Caco-2 (cell line): ENCODE measurements at regions of chr7 and their contacts with region 1.

Region 1: GRCh38 chr7:39948956-39949928 is 814 bp upstream of the CDK13 start:
- DNase-seq: peak; percentile 98 to 99
- H3K4me3 ChIP-seq: peak overlapping the region; percentile 93
- H3K4me3 Mint-ChIP-seq: peak overlapping the region; percentile 96
- H3K27ac Mint-ChIP-seq: peak overlapping the region; percentile 99
- H3K4me1 ChIP-seq: peaks cover 9% of the 10 kb centered on the region; the same call in 1 of the 2 replicates
- H3K4me1 Mint-ChIP-seq: no peaks in the 10 kb centered on the region
- H3K27me3 ChIP-seq: no peaks in the 10 kb centered on the region
- H3K27me3 Mint-ChIP-seq: no peaks in the 10 kb centered on the region
- CTCF ChIP-seq: no peak

Region 2: GRCh38 chr7:40057292-40057691 is 108.0 kb after region 1 on chr7:
- CTCF ChIA-PET with region 1: interaction called, 20 read pairs
- POLR2A ChIA-PET with region 1: no interaction called
- intact Hi-C with region 1: loop called (anchors 1 kb)
- DNase-seq: no peak
- H3K4me3 ChIP-seq: no peak overlapping the region
- H3K4me3 Mint-ChIP-seq: no peak overlapping the region
- H3K27ac Mint-ChIP-seq: no peak overlapping the region
- H3K4me1 ChIP-seq: peaks cover 9% of the 10 kb centered on the region
- H3K4me1 Mint-ChIP-seq: peaks cover 11% of the 10 kb centered on the region
- H3K27me3 ChIP-seq: no peaks in the 10 kb centered on the region
- H3K27me3 Mint-ChIP-seq: no peaks in the 10 kb centered on the region
- CTCF ChIP-seq: no peak

Region 3: DNA sequence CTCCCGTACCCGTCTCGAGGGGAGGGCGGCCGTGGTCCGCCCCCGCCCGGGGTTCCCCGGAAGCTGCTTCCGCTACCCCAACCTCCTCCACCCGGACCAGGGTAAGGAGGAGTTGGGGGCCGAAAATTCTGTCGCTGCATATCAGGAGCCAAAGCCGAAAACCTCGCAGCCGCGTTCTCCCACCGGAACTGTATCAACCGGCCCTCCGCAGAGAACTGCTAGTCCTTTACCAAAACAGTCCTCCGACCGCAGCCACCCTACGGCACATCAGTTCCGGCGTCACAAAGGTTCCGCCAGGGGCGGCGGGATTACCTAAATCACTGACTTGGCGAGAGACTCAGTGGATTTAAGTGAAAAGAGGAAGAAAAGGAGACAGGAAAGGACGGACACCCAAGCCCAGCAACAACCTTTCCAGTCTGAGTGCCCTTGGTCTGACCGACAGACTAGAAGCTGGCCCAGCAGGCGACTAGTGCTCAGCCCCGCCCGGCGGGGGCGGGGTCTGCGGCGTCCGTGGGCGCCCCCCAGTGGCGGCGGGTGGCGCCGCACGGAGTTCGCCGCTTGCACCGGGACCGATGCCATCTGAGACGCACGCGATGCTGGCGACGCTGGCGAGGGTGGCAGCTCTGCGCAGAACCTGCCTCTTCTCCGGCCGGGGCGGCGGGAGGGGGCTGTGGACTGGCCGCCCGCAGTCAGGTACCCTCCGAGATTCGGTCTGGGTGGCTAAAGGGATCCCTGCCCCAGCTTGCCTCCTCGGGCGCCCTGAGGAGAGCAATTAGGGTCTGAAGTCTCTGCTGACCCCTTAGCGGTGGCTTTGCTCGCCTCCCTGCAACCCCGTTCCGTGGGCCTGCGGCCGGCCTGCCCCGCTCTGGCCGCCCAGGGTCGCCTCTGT is 185.4 kb after region 1 on chr7 and contains the starts of genes MPLKIP and SUGCT:
- CTCF ChIA-PET with region 1: no interaction called
- POLR2A ChIA-PET with region 1: interaction called, 4 read pairs
- intact Hi-C with region 1: loop called (anchors 2 kb)
- DNase-seq: peak; percentile 85 to 88
- H3K4me3 ChIP-seq: peak within 1 kb of the TSS; percentile 89
- H3K4me3 Mint-ChIP-seq: peak within 1 kb of the TSS; percentile 92
- H3K27ac Mint-ChIP-seq: peak within 1 kb of the TSS; percentile 92
- H3K4me1 ChIP-seq: peaks cover 9% of the 10 kb centered on the region
- H3K4me1 Mint-ChIP-seq: no peaks in the 10 kb centered on the region
- H3K27me3 ChIP-seq: no peaks in the 10 kb centered on the region
- H3K27me3 Mint-ChIP-seq: no peaks in the 10 kb centered on the region
- CTCF ChIP-seq: peak; percentile 62 to 97
- total RNA-seq, gene MPLKIP: 34.0 and 39.7 TPM in 2 replicates
- total RNA-seq, gene SUGCT: 9.9 and 12.2 TPM in 2 replicates